GM10248 (cell line): ENCODE measurements at regions of chr6 and their contacts with region 1.

Region 1: DNA sequence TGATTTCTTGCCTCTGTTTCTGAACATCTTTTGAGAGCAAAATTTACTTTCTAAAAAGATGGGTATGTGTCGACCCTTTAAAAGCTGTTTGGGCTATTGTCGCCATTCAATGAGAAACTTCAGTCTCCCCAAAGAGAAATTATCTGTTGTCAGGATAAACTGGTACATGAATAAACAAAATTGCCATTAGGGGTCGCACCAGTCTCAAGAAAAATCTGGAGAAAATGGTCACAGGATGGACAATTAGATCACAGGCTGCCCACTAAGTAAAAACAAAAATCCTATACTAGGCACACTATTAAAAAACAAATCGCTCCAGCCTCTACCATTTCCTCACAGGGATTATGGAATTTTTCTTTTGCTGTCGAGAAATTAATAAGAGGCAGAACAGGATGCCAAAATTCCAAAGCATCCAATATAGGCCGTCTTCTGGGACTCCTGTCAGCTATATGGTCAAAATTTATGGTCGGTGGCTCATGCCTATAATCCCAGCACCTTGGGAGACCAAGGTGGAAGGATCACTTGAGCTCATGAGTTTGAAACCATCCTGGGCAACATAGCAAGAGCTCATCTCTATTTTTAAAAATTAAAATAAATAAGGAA is 5.5 kb upstream of the HLA-E start:
- DNase-seq: peak; percentile 55
- CTCF ChIP-seq: peak; percentile 70

Region 2: DNA sequence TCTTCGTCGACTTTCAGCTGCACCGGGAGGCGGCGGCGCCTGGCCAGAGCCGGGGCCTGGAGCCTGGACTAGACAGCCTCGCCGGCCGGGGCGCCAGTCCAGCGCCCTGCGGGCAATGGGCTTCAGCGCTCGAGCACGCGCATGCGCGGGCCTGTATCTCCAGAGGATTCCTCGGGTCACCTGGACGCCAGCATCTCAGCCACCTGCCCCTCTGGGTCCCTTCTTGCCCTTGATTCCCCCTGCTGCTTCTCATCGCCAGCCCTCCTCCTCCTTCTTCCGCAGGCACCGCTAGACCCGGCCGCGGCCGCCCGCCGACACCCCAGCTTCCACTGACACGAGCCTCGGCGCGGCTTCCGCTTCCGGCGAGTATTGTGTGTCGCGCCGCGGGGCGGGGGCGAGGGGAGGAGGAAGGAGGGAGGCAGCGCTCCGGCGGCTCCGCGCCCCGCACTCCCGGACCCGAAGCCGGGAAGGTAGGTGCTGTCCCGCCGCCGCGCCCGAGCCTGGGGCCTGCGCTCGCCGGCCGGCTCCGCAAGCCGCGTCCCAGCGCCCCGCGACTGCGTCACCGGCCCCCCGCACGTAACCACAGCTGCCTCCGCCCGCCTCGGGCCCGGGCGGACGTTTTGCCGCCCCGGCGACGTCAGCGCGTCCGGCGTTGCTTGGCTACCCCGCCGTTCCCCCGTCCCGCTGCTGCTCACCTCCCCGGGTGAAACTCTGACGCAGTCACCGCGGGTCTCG is 157.1 kb before region 1 on chr6 and contains the start of gene TRIM39:
- CTCF ChIA-PET with region 1: no interaction called
- POLR2A ChIA-PET with region 1: no interaction called
- DNase-seq: peak; percentile 89
- CTCF ChIP-seq: no peak

Region 3: DNA sequence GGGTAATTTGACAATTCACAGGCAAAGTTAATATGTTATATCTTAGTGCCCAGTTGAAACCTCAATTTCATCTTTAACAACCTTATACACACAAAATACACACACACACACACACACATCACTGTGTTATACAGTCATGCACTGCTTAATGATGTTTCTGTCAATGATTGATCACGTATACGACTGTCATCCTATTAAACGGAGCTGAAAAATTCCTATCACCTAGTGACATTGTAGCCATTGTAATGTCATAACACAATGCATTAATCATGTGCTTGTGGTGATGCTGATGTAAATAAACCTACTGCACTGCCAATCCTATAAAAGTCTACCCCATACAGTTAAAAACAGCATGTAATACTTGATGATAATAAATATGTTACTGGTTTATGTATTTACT is 59.2 kb before region 1 on chr6:
- CTCF ChIA-PET with region 1: no interaction called
- POLR2A ChIA-PET with region 1: no interaction called
- DNase-seq: no peak
- CTCF ChIP-seq: no peak

Region 4: GRCh38 chr6:30463651-30464618 is 19.8 kb before region 1 on chr6:
- CTCF ChIA-PET with region 1: interaction called, 22 read pairs
- POLR2A ChIA-PET with region 1: no interaction called
- DNase-seq: no peak
- CTCF ChIP-seq: no peak

Region 5: GRCh38 chr6:30533460-30534294 is 49.9 kb after region 1 on chr6:
- CTCF ChIA-PET with region 1: interaction called, 278 read pairs
- POLR2A ChIA-PET with region 1: no interaction called
- DNase-seq: no peak
- CTCF ChIP-seq: no peak

Region 6: DNA sequence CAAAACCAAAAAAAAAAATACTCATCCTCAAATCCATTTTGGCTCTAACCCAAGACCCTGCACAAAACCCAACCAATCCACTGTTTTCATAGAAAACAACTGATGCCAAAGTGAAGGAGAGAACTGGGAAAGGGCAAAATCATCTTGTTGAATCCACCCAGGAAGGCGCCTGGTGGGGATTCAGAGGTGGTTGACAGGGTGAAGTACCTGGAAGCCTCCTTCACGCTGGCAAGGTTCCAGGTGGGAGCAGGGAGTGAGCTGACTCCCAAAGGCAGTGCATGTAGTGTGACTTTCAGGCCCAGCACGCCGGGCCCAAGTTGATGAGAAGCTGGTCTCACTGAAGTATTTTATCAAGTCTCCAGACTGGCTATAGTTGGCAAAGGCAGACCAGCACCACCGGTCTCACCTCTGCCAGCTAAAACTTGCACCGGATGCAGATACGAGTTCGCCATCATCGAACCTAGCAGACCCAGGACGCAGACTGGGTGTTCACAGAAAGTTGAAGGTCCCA is 116.7 kb after region 1 on chr6:
- CTCF ChIA-PET with region 1: interaction called, 50 read pairs
- POLR2A ChIA-PET with region 1: no interaction called
- DNase-seq: no peak
- CTCF ChIP-seq: no peak

Region 7: DNA sequence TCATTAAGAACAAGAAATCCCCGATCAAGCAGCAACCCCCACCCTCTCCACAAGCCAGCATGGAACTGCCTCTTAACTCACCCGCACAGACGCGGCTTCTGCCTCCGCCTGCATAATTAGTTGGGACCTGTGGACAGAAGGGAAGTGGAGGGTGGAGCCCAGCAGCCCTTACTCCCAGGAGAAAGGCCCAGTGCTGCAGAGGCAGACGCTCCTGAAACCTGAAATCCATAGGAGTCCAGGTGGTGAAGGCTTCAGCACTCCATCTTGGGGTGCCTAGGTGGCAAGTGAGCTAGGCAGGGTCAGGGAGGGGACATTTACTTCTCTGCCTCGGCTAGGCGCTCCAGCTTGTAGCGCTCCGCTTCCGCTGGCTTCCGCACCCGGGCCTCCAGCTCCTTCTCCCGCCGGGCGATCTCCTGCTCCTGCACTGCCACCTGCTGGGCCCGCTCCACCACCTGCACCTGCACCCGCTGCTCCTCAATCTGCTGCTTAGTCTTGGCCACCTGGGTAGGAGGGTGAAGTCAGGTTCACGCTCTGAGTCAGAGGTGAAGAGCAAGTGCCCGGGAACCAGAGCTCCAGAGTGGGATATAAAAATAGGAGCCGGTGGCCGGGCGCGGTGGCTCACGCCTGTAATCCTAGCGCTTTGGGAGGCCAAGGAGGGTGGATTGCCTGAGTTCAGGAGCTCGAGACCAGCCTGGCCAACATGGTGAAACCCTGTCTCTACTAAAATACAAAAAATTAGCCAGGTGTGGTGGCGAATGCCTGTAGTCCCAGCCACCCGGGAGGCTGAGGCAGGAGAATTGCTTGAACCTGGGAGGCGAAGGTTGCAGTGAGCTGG is 247.0 kb after region 1 on chr6:
- CTCF ChIA-PET with region 1: interaction called, 21 read pairs
- POLR2A ChIA-PET with region 1: no interaction called
- DNase-seq: peak; percentile 78
- CTCF ChIP-seq: peak; percentile 98

Region 8: DNA sequence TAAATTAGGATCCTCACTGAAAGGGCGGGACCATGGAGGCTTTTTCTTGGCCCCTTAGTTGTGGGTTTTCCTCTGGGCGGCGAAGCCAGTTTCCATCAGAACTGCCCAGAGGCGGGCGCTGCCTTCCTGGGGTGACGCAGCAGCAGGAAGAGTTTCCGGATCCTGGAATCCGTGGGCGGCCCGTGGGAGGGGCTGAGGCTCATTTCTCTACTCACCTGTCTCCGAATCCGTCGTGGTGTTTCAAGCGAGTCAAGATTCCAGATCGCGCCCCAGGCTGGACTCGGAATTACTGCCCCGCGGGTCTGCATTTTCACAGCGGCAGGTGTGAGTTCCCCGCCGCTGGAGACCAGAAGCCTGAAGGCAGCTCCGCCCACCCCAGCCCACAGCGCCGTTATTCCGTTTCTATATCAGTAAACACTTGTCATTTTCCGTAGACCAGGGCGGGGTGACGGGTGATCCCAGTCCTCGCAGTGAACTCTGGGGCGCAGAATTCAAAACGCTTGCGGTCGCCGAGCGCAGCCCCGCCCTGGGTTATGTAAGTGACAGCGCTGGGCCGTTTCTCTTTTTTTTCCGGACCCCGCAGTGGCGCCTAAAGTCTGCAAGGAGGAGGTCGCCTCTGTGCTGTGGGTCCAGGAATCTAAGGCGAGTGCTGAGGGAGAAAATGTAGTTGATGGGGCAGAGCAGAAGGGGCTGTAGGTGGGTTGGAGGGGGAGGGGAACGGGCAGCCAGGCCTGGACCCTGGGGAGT is 714.0 kb after region 1 on chr6:
- CTCF ChIA-PET with region 1: no interaction called
- POLR2A ChIA-PET with region 1: no interaction called
- DNase-seq: peak; percentile 76
- CTCF ChIP-seq: no peak